Common myeloid progenitor, CD34-positive (primary cell): ENCODE measurements at regions of chr10 and their contacts with region 1.

Region 1: GRCh38 chr10:45420453-45421192 is 46.6 kb downstream of the ALOX5 start:
- DNase-seq: peak; percentile 86 to 94 (median 92)
- H3K4me3 ChIP-seq: peak overlapping the region in 4 of 7 experiments; percentile 37 to 66 (median 48)
- H3K27ac ChIP-seq: peak overlapping the region; percentile 66 to 82
- H3K4me1 ChIP-seq: peaks cover 9 to 81% (median 71%) of the 10 kb centered on the region in 4 experiments
- H3K27me3 ChIP-seq: no peaks in the 10 kb centered on the region

Region 2: DNA sequence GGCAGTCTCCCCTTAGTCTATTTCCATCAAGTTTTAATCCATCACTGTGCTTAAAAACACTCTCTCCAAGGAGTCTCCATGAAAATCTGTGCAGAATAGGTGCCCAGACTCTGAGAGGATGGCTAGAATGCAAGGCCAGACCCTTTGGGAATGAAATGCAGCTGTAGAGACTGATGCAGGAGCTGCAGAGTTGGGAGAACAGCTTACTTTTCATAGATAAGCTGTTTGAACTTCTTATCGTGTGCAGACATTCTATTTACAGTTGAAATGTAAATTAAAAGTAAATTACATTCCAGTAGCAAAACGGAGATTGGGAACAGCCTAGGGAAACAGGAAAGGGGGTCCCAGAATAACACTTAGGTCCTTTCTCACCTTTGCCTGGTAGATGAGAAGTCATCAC is 405.0 kb before region 1 on chr10:
- CTCF ChIA-PET with region 1: no interaction called
- POLR2A ChIA-PET with region 1: no interaction called
- DNase-seq: no peak
- H3K4me3 ChIP-seq: no peak overlapping the region
- H3K27ac ChIP-seq: no peak overlapping the region
- H3K4me1 ChIP-seq: no peaks in the 10 kb centered on the region
- H3K27me3 ChIP-seq: no peaks in the 10 kb centered on the region

Region 3: GRCh38 chr10:45404087-45404769 is 16.4 kb before region 1 on chr10:
- CTCF ChIA-PET with region 1: interaction called, 11 read pairs
- POLR2A ChIA-PET with region 1: interaction called, 16 read pairs
- DNase-seq: peak; percentile 80 to 94 (median 90)
- H3K4me3 ChIP-seq: no peak overlapping the region
- H3K27ac ChIP-seq: no peak overlapping the region
- H3K4me1 ChIP-seq: peaks cover 18 to 35% (median 25%) of the 10 kb centered on the region in 4 experiments
- H3K27me3 ChIP-seq: no peaks in the 10 kb centered on the region